Transverse colon (tissue), 4 donors: ENCODE measurements at regions of chr15 and their contacts with region 1.

Region 1: GRCh38 chr15:70222606-70223005 is 124.9 kb upstream of the TLE3 start:
- DNase-seq: no peak
- H3K4me3 ChIP-seq: no peak overlapping the region
- H3K27ac ChIP-seq: no peak overlapping the region
- H3K4me1 ChIP-seq: no peaks in the 10 kb centered on the region
- H3K27me3 ChIP-seq: no peaks in the 10 kb centered on the region
- CTCF ChIP-seq: no peak
- EP300 ChIP-seq: no peak
- POLR2A ChIP-seq: no peak

Region 2: GRCh38 chr15:69394556-69395282 is 827.9 kb before region 1 on chr15:
- in situ Hi-C with region 1: no loop called
- intact Hi-C with region 1: loop called (anchors 5 kb)
- DNase-seq: peak; percentile 81
- H3K4me3 ChIP-seq: no peak overlapping the region
- H3K27ac ChIP-seq: no peak overlapping the region
- H3K4me1 ChIP-seq: peaks cover 0 to 7% (median 5%) of the 10 kb centered on the region in 4 donors
- H3K27me3 ChIP-seq: no peaks in the 10 kb centered on the region
- CTCF ChIP-seq: peak; percentile 90 to 98 (median 96)
- EP300 ChIP-seq: no peak
- POLR2A ChIP-seq: no peak